Tibial artery (tissue), 4 donors: ENCODE measurements at regions of chr15 and their contacts with region 1.

Region 1: GRCh38 chr15:91116113-91117067 is 16.3 kb downstream of the SV2B start:
- DNase-seq: no peak
- H3K4me3 ChIP-seq: no peak overlapping the region
- H3K27ac ChIP-seq: no peak overlapping the region
- H3K4me1 ChIP-seq: no peaks in the 10 kb centered on the region
- H3K27me3 ChIP-seq: no peaks in the 10 kb centered on the region
- CTCF ChIP-seq: no peak

Region 2: DNA sequence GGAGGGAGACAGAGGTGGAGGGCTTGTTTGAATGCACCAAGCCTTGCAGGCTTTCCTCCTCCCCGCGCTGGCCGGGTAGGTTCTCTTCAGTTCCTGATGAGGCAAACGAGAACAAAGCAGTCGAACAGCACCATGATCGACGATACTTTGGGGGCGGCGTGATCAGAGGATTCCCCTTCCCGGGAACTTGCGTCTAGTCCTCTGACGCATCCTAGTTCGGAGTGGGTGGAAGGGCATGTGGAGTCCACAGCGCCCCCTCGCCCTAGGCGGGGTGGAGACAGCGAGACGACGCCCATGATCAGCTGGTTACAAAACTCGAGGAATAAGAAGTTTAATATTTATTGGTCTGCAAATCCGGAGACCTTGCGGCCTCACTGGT is 16.8 kb before region 1 on chr15:
- intact Hi-C with region 1: no loop called
- DNase-seq: peak in 1 of 2 donors; percentile 29
- H3K4me3 ChIP-seq: peak overlapping the region; percentile 34 to 46
- H3K27ac ChIP-seq: no peak overlapping the region
- H3K4me1 ChIP-seq: peaks cover 0 to 21% (median 12%) of the 10 kb centered on the region in 4 donors
- H3K27me3 ChIP-seq: peaks cover 0 to 57% of the 10 kb centered on the region in 2 donors
- CTCF ChIP-seq: no peak

Region 3: GRCh38 chr15:91224755-91225380 is 108.5 kb after region 1 on chr15:
- intact Hi-C with region 1: loop called (anchors 10 kb)
- DNase-seq: no peak
- H3K4me3 ChIP-seq: no peak overlapping the region
- H3K27ac ChIP-seq: no peak overlapping the region
- H3K4me1 ChIP-seq: no peaks in the 10 kb centered on the region
- H3K27me3 ChIP-seq: peaks cover 0 to 16% of the 10 kb centered on the region in 2 donors
- CTCF ChIP-seq: peak; percentile 38 to 43

Region 4: GRCh38 chr15:91435113-91435512 is 318.7 kb after region 1 on chr15:
- intact Hi-C with region 1: no loop called
- DNase-seq: no peak
- H3K4me3 ChIP-seq: no peak overlapping the region
- H3K27ac ChIP-seq: no peak overlapping the region
- H3K4me1 ChIP-seq: no peaks in the 10 kb centered on the region
- H3K27me3 ChIP-seq: no peaks in the 10 kb centered on the region
- CTCF ChIP-seq: no peak